ENCODE measurements at regions of chr9 and their contacts with region 1.

Region 1: GRCh38 chr9:133726401-133727276 is 11.5 kb downstream of the SARDH start:
- DNase-seq: peak; percentile 62 to 65
- ATAC-seq: peak; percentile 60 to 90 (median 79)
- H3K4me3 ChIP-seq: no peak overlapping the region
- H3K27ac ChIP-seq: no peak overlapping the region
- H3K4me1 ChIP-seq: no peaks in the 10 kb centered on the region
- H3K27me3 ChIP-seq: peaks cover 0 to 47% (median 27%) of the 10 kb centered on the region in 7 donors
- CTCF ChIP-seq: peak; percentile 39 to 78 (median 65)

Region 2: DNA sequence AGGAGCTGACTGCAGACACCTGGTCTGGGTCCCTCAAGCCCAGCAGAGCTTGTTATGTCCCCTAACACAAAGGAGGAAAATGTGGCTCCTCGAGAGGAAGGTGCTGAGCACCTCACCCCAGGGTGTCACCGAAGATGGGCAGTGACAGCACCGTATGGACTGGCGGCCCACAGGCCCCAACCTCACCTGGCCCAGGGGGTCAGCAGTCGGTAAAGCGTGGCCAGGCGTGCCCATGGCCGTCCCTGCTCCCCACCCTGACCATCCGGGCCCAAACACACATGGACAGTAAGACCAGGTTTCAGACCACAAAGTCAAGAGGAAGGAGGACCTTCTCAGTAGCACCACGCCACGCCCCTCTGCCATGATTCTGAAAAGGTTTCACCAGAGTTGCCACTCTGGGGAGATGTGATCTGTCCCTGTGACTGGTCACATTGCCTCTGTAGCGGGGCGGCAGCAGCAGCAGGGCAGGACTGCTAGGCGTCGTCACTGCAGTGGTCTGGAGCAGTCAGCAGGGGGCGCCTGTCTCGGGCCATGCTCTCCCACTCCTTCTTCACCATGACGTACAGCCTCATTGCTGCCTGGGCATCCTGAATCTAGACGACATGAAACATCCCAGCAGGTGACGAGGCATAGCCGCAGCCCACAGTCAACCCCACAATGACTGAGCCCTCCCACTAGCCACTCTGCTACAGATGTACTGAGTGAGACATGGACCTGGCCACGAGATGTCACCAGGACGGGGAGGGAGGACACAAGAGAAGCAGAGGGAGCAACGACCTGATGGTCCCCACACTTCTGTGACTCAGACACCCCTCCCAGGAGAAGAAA is 319.9 kb before region 1 on chr9:
- intact Hi-C with region 1: loop called in 5 of 10 experiments (anchors 5 to 10 kb)
- DNase-seq: peak; percentile 67 to 75
- ATAC-seq: peak; percentile 63 to 91 (median 82)
- H3K4me3 ChIP-seq: no peak overlapping the region
- H3K27ac ChIP-seq: no peak overlapping the region
- H3K4me1 ChIP-seq: peaks cover 0 to 13% (median 0%) of the 10 kb centered on the region in 9 donors
- H3K27me3 ChIP-seq: no peaks in the 10 kb centered on the region
- CTCF ChIP-seq: peak; percentile 79 to 96 (median 92)

Region 3: GRCh38 chr9:133589454-133590227 is 137.0 kb before region 1 on chr9:
- intact Hi-C with region 1: loop called in 2 of 10 experiments (anchors 5 kb)
- DNase-seq: no peak
- ATAC-seq: no peak
- H3K4me3 ChIP-seq: no peak overlapping the region
- H3K27ac ChIP-seq: no peak overlapping the region
- H3K4me1 ChIP-seq: peaks cover 0 to 17% (median 12%) of the 10 kb centered on the region in 9 donors
- H3K27me3 ChIP-seq: peaks cover 0 to 54% (median 33%) of the 10 kb centered on the region in 7 donors
- CTCF ChIP-seq: peak in 8 of 9 donors; percentile 28 to 61 (median 48)

Region 4: GRCh38 chr9:133609311-133610098 is 117.1 kb before region 1 on chr9 and contains the start of gene FAM163B:
- intact Hi-C with region 1: loop called in 1 of 10 experiments (anchors 10 kb)
- DNase-seq: peak; percentile 47 to 55
- ATAC-seq: peak; percentile 67 to 92 (median 82)
- H3K4me3 ChIP-seq: peak within 1 kb of the TSS in 1 of 10 donors; percentile 16
- H3K27ac ChIP-seq: no peak within 1 kb of the TSS
- H3K4me1 ChIP-seq: no peaks in the 10 kb centered on the region
- H3K27me3 ChIP-seq: peaks cover 6 to 94% (median 87%) of the 10 kb centered on the region in 7 donors
- CTCF ChIP-seq: no peak
- total RNA-seq, gene FAM163B: not detected

Region 5: DNA sequence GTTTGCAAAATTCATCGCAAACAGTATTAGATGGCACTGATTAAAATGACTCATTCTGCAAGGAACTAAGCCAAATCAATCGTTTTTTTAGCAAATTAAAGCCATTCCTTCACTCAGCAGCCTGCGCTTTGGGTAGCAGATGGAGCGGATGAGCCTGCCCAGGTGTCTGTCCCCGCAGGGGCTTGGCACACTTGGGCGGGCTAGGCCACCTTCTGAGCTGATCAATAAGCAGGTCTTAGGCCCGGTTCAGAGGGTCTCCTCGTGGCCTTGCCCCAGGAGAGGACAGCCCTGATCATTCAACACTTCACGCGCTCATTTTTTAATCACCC is 1269.1 kb after region 1 on chr9:
- intact Hi-C with region 1: no loop called
- DNase-seq: no peak
- ATAC-seq: no peak
- H3K4me3 ChIP-seq: no peak overlapping the region
- H3K27ac ChIP-seq: no peak overlapping the region
- H3K4me1 ChIP-seq: no peaks in the 10 kb centered on the region
- H3K27me3 ChIP-seq: peaks cover 0 to 9% (median 0%) of the 10 kb centered on the region in 7 donors
- CTCF ChIP-seq: no peak

Measured in heart right ventricle (tissue), 16 donors.